ENCODE measurements at regions of chr14 and their contacts with region 1.

Region 1: GRCh38 chr14:34875031-34875922 is at the start of gene BAZ1A:
- DNase-seq: peak in 8 of 9 experiments; percentile 4 to 79 (median 34)
- ATAC-seq: peak; percentile 11
- H3K4me3 ChIP-seq: peak within 1 kb of the TSS; percentile 59 to 95
- H3K4me3 Mint-ChIP-seq: peak within 1 kb of the TSS; percentile 100
- H3K27ac ChIP-seq: peak within 1 kb of the TSS; percentile 96 to 100
- H3K27ac Mint-ChIP-seq: peak within 1 kb of the TSS; percentile 99
- H3K4me1 ChIP-seq: peaks cover 14% of the 10 kb centered on the region
- H3K4me1 Mint-ChIP-seq: peaks cover 32% of the 10 kb centered on the region
- H3K27me3 ChIP-seq: no peaks in the 10 kb centered on the region
- H3K27me3 Mint-ChIP-seq: no peaks in the 10 kb centered on the region
- CTCF ChIP-seq: no peak
- total RNA-seq, gene BAZ1A: 48.8 to 52.7 TPM

Region 2: GRCh38 chr14:34629657-34630529 is 245.4 kb before region 1 on chr14 and contains the start of gene SNX6:
- CTCF ChIA-PET with region 1: no interaction called
- POLR2A ChIA-PET with region 1: no interaction called
- intact Hi-C with region 1: loop called (anchors 1 to 5 kb)
- DNase-seq: peak; percentile 70 to 92 (median 83)
- ATAC-seq: peak; percentile 96
- H3K4me3 ChIP-seq: peak within 1 kb of the TSS; percentile 95 to 100
- H3K4me3 Mint-ChIP-seq: peak within 1 kb of the TSS; percentile 94
- H3K27ac ChIP-seq: peak within 1 kb of the TSS; percentile 91 to 96
- H3K27ac Mint-ChIP-seq: peak within 1 kb of the TSS; percentile 93
- H3K4me1 ChIP-seq: peaks cover 20% of the 10 kb centered on the region
- H3K4me1 Mint-ChIP-seq: peaks cover 37% of the 10 kb centered on the region
- H3K27me3 ChIP-seq: no peaks in the 10 kb centered on the region
- H3K27me3 Mint-ChIP-seq: peaks cover 4% of the 10 kb centered on the region
- CTCF ChIP-seq: no peak
- total RNA-seq, gene SNX6: 51.2 to 53.5 TPM

Region 3: DNA sequence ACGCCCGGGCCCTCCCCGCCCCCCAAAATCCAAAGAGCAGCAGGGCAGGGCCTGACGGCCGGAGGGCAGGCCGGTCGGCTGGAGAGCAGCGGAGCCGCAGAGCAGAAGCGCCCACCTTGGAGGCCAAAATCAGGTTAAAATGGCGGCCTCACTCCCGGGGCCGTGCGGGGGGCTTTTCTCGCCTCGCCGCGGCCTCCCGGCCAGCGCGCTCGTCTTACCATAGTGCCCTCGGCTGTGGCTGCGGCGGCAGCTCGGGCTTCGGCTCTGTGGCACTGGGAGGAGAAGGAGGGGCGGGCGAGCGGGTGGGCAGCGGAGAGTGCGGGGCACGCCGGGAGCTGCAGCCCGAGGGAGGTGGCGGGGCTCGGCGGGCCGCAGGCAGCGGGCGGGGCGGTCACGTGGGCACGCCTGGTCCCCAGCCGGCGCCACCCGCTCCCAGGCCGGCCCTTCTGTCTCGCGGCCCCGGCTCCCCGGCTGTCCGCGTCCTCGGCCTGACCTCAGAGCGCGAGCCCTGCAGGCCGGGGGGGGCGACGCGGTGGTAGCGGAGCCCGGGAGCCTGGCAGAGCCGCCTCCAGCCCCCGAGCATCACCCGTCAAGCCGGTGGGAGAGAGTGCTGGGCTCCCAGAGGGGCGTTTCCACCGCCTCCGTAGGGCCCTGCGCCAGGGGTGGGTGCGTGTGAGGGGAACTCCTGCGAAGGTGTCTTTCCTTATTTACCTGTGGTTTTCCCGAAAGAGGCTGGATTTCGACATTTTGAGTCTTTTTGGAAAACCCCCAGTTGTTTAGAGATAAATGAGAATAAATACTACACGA is 160.8 kb before region 1 on chr14 and contains the start of gene CFL2:
- CTCF ChIA-PET with region 1: no interaction called
- POLR2A ChIA-PET with region 1: no interaction called
- intact Hi-C with region 1: loop called in 1 of 2 experiments (anchors 5 kb)
- DNase-seq: peak; percentile 35 to 92 (median 72)
- ATAC-seq: peak; percentile 86
- H3K4me3 ChIP-seq: peak within 1 kb of the TSS; percentile 72 to 78
- H3K4me3 Mint-ChIP-seq: peak within 1 kb of the TSS; percentile 92
- H3K27ac ChIP-seq: peak within 1 kb of the TSS; percentile 45 to 51
- H3K27ac Mint-ChIP-seq: peak within 1 kb of the TSS; percentile 90
- H3K4me1 ChIP-seq: peaks cover 13% of the 10 kb centered on the region
- H3K4me1 Mint-ChIP-seq: peaks cover 33% of the 10 kb centered on the region
- H3K27me3 ChIP-seq: no peaks in the 10 kb centered on the region
- H3K27me3 Mint-ChIP-seq: peaks cover 2% of the 10 kb centered on the region
- CTCF ChIP-seq: no peak
- total RNA-seq, gene CFL2: 35.1 to 35.4 TPM

Region 4: GRCh38 chr14:34833549-34834523 is 41.4 kb before region 1 on chr14:
- CTCF ChIA-PET with region 1: no interaction called
- POLR2A ChIA-PET with region 1: no interaction called
- intact Hi-C with region 1: loop called (anchors 5 kb)
- DNase-seq: peak in 2 of 9 experiments; percentile 29 to 55
- ATAC-seq: peak; percentile 65
- H3K4me3 ChIP-seq: no peak overlapping the region
- H3K4me3 Mint-ChIP-seq: no peak overlapping the region
- H3K27ac ChIP-seq: peak overlapping the region; percentile 31 to 72
- H3K27ac Mint-ChIP-seq: peak overlapping the region; percentile 89
- H3K4me1 ChIP-seq: peaks cover 31% of the 10 kb centered on the region
- H3K4me1 Mint-ChIP-seq: peaks cover 56% of the 10 kb centered on the region
- H3K27me3 ChIP-seq: no peaks in the 10 kb centered on the region
- H3K27me3 Mint-ChIP-seq: no peaks in the 10 kb centered on the region
- CTCF ChIP-seq: no peak

Region 5: DNA sequence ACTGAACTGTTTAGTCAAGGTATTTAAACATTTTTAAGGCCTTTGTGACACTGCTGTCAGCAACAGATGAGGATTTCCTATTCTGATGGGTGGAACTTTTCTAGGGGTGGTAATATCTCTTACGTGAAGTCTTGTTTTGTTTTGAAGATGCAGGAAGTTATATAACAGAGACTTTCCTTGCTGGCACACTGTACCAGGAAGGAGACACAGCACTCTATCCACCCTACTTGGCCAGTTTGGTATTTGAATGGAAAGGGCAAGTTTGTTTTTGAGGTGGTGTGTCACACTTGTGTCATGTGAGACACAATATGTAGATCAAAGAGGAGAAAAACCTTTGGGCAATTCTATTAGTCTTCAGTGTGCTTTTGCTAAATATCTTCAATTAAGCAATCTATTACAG is 55.9 kb after region 1 on chr14:
- CTCF ChIA-PET with region 1: interaction called, 4 read pairs
- POLR2A ChIA-PET with region 1: interaction called, 10 read pairs
- intact Hi-C with region 1: loop called (anchors 1 to 2 kb)
- DNase-seq: peak in 7 of 9 experiments; percentile 9 to 87 (median 59)
- ATAC-seq: peak; percentile 90
- H3K4me3 ChIP-seq: peak overlapping the region in 1 of 2 experiments; percentile 4
- H3K4me3 Mint-ChIP-seq: peak overlapping the region; percentile 49
- H3K27ac ChIP-seq: peak overlapping the region; percentile 87 to 93
- H3K27ac Mint-ChIP-seq: peak overlapping the region; percentile 97
- H3K4me1 ChIP-seq: peaks cover 28% of the 10 kb centered on the region
- H3K4me1 Mint-ChIP-seq: peaks cover 30% of the 10 kb centered on the region
- H3K27me3 ChIP-seq: no peaks in the 10 kb centered on the region
- H3K27me3 Mint-ChIP-seq: no peaks in the 10 kb centered on the region
- CTCF ChIP-seq: no peak

Region 6: DNA sequence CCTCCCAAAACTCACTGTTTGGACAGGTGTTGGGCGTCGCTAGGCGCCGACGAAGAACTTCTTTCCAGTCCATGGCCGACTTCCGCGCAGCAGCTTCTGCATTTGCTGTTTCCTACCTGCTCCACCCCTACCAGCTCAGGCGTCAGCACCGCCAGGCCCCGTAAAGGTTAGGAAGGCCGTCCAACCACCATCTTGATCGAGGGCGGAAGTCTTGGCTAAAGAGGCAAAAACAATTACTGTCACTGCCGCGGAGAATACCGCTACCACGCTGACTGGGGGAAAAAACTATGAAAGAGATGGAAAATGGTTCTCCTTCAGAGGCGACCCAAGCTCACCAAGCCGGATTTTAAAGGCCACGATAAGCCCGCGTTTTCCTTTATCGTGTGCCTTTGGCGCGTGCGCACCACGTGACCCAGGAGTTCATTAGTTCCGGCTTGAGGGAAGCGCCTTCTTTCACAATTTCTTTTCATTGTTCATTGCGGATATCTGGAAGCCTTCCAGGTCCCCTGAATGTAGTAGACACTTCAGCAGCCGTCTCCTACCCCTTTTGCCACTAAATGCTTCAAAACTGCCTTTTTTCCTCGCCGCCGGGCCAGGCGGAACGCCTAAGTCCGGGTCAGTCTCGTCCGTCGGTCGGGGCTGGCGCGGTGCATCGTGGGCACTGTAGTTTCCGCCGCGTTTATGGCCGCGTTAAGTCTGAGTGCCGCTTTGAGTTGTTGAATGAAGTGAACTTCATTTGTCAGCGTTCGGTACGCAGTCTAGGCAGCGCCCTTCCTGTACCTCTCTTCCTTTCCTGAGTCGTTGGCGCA is 246.8 kb after region 1 on chr14 and contains the starts of genes PPP2R3C and PRORP:
- CTCF ChIA-PET with region 1: no interaction called
- POLR2A ChIA-PET with region 1: interaction called, 12 read pairs
- intact Hi-C with region 1: loop called (anchors 1 to 5 kb)
- DNase-seq: peak; percentile 78 to 96 (median 88)
- ATAC-seq: peak; percentile 83
- H3K4me3 ChIP-seq: peak within 1 kb of the TSS; percentile 71 to 90
- H3K4me3 Mint-ChIP-seq: peak within 1 kb of the TSS; percentile 99
- H3K27ac ChIP-seq: peak within 1 kb of the TSS; percentile 96 to 97
- H3K27ac Mint-ChIP-seq: peak within 1 kb of the TSS; percentile 100
- H3K4me1 ChIP-seq: peaks cover 33% of the 10 kb centered on the region
- H3K4me1 Mint-ChIP-seq: peaks cover 66% of the 10 kb centered on the region
- H3K27me3 ChIP-seq: no peaks in the 10 kb centered on the region
- H3K27me3 Mint-ChIP-seq: no peaks in the 10 kb centered on the region
- CTCF ChIP-seq: no peak
- total RNA-seq, gene PPP2R3C: 44.2 to 51.4 TPM
- total RNA-seq, gene PRORP: 16.5 to 21.9 TPM

Measured in CD8-positive, alpha-beta T cell (primary cell).